Adrenal gland (tissue), 19 donors: ENCODE measurements at regions of chr18 and their contacts with region 1.

Region 1: GRCh38 chr18:21111341-21112139 is at the start of gene ROCK1:
- DNase-seq: peak; percentile 97 to 99 (median 99)
- H3K4me3 ChIP-seq: peak within 1 kb of the TSS; percentile 73 to 100 (median 86)
- H3K27ac ChIP-seq: peak within 1 kb of the TSS; percentile 93 to 99 (median 96)
- H3K4me1 ChIP-seq: peaks cover 25 to 43% of the 10 kb centered on the region in 2 donors
- H3K27me3 ChIP-seq: no peaks in the 10 kb centered on the region
- CTCF ChIP-seq: peak in 1 of 6 experiments; percentile 12
- POLR2A ChIP-seq: peak; percentile 71 to 97
- total RNA-seq, gene ROCK1: 12.8 to 55.5 (median 33.0) TPM

Region 2: DNA sequence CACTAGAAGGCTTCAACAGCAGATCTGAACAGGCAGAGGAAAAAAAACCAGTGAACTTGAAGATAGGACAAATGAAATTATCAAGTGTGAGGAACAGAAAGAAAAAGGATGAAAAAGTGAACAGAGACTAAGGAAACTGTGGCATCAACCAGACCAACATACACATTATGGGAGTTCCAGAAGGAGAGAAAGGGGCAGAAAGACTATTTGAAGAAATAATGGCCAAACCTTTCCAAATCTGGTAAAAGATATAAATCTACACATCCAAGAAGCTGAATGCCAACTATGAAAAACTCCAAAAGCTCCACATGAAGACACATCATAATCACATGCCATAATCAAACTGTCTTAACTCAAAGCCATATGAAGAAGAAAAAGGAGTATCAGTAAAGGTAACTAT is 79.7 kb before region 1 on chr18:
- intact Hi-C with region 1: loop called in 1 of 2 experiments (anchors 10 kb)
- DNase-seq: no peak
- H3K4me3 ChIP-seq: no peak overlapping the region
- H3K27ac ChIP-seq: no peak overlapping the region
- H3K4me1 ChIP-seq: no peaks in the 10 kb centered on the region
- H3K27me3 ChIP-seq: no peaks in the 10 kb centered on the region
- CTCF ChIP-seq: no peak
- POLR2A ChIP-seq: no peak

Region 3: GRCh38 chr18:21053127-21053526 is 58.4 kb before region 1 on chr18:
- intact Hi-C with region 1: no loop called
- DNase-seq: peak in 2 of 7 donors; percentile 23 to 37
- H3K4me3 ChIP-seq: no peak overlapping the region
- H3K27ac ChIP-seq: peak overlapping the region in 4 of 5 donors; percentile 18 to 75 (median 35)
- H3K4me1 ChIP-seq: peaks cover 7 to 60% of the 10 kb centered on the region in 2 donors
- H3K27me3 ChIP-seq: no peaks in the 10 kb centered on the region
- CTCF ChIP-seq: no peak
- POLR2A ChIP-seq: no peak

Region 4: DNA sequence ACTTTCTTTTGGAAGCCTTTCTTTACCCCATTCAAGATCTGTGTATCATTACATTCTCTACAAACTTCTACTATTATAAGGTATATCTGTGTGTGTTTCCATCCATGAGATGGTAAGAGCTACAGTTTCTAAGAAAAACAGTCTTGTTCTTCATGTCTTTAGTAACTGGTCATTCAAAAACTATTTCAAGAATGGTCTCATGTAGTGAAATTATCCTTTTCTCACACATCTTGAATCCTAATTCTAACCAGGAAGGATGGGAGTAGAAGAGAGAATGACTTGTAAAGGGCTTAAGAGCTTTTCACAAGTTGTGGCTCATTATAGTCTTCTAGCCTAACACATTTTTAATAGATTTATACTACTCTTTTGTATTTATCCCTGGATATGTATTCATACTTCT is 47.2 kb before region 1 on chr18:
- intact Hi-C with region 1: no loop called
- DNase-seq: no peak
- H3K4me3 ChIP-seq: no peak overlapping the region
- H3K27ac ChIP-seq: no peak overlapping the region
- H3K4me1 ChIP-seq: no peaks in the 10 kb centered on the region
- H3K27me3 ChIP-seq: no peaks in the 10 kb centered on the region
- CTCF ChIP-seq: no peak
- POLR2A ChIP-seq: no peak

Region 5: GRCh38 chr18:21074336-21075323 is 36.9 kb before region 1 on chr18:
- intact Hi-C with region 1: loop called in 1 of 2 experiments (anchors 5 kb)
- DNase-seq: no peak
- H3K4me3 ChIP-seq: no peak overlapping the region
- H3K27ac ChIP-seq: no peak overlapping the region
- H3K4me1 ChIP-seq: peaks cover 17 to 58% of the 10 kb centered on the region in 2 donors
- H3K27me3 ChIP-seq: no peaks in the 10 kb centered on the region
- CTCF ChIP-seq: no peak
- POLR2A ChIP-seq: no peak

Region 6: GRCh38 chr18:21369146-21369545 is 257.6 kb after region 1 on chr18:
- intact Hi-C with region 1: no loop called
- DNase-seq: no peak
- H3K4me3 ChIP-seq: no peak overlapping the region
- H3K27ac ChIP-seq: no peak overlapping the region
- H3K4me1 ChIP-seq: peaks cover 0 to 4% of the 10 kb centered on the region in 2 donors
- H3K27me3 ChIP-seq: no peaks in the 10 kb centered on the region
- CTCF ChIP-seq: no peak
- POLR2A ChIP-seq: no peak